K562 (cell line): ENCODE measurements at regions of chr5 and their contacts with region 1.

Region 1: GRCh38 chr5:135944967-135945560 is 9.7 kb downstream of the LECT2 start:
- DNase-seq: peak; percentile 15 to 71 (median 26)
- ATAC-seq: peak; percentile 67; the same call in 2 of the 3 replicates
- H3K4me3 ChIP-seq: no peak overlapping the region
- H3K27ac ChIP-seq: no peak overlapping the region
- H3K4me1 ChIP-seq: no peaks in the 10 kb centered on the region
- H3K27me3 ChIP-seq: 0 out of 5 replicates have a peak, but pooled peaks cover 0 to 3% of the 10 kb centered on the region in 2 experiments
- CTCF ChIP-seq: peak; percentile 61 to 83 (median 71); a peak in 5 of 6 replicates
- EP300 ChIP-seq: no peak
- POLR2A ChIP-seq: no peak
- RAD21 ChIP-seq: peak; percentile 61 to 88

Region 2: DNA sequence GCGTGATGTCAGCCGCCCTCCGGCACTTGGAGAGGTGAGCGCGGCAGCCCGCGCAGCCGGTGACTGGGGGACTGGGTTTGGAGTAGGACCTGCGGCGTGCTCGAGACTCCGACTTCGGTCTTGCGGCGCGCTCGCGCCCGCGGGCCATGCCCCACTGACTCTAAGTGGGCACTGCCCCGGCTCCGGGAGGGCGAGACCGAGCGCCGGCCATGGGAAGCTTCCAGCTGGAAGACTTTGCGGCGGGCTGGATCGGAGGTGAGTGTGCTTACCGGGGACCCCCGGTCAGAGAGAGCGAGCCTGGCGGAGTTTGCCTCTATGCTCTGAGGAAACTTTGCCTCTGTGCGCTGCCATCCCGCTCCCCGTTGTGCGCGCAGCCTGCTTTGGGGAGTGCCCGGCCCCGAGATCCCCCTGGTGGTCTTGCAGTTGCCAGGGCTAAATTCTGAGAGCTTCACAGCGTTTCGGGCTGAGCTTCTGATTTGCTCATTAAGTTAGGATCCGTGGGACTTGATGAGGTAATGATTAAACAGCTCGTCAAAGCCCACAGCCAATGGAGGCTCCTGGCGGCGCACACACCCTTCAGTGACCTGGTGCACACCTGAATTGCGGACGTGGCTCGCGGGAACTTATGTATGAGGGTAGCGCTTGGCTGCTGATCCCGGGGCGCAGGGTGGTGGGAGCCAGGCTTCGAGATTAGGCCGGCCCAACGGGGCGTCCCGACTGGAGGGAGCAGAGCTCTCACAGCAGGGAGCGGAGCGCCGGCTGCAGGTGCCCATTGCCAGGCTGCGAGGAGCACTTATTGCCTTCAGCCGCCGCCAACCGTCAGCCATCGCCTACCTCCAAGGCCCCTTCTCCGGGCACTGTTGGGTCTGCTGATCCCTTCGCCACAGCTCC is 110.2 kb before region 1 on chr5 and contains the start of gene SLC25A48:
- CTCF ChIA-PET with region 1: no interaction called
- POLR2A ChIA-PET with region 1: no interaction called
- in situ Hi-C with region 1: no loop called
- intact Hi-C with region 1: no loop called
- DNase-seq: peak in 2 of 4 experiments; percentile 72 to 78
- ATAC-seq: no peak
- H3K4me3 ChIP-seq: no peak within 1 kb of the TSS
- H3K27ac ChIP-seq: no peak within 1 kb of the TSS
- H3K4me1 ChIP-seq: peaks cover 0 to 9% of the 10 kb centered on the region in 2 experiments; a peak in 1 of 5 replicates
- H3K27me3 ChIP-seq: peaks cover 2 to 40% of the 10 kb centered on the region in 2 experiments; a peak in 3 of 5 replicates
- CTCF ChIP-seq: peak in 1 of 3 experiments; percentile 62; a peak in 1 of 6 replicates
- EP300 ChIP-seq: no peak
- POLR2A ChIP-seq: no peak
- RAD21 ChIP-seq: no peak
- polyA plus RNA-seq, gene SLC25A48: 0.08 to 0.22 TPM

Region 3: DNA sequence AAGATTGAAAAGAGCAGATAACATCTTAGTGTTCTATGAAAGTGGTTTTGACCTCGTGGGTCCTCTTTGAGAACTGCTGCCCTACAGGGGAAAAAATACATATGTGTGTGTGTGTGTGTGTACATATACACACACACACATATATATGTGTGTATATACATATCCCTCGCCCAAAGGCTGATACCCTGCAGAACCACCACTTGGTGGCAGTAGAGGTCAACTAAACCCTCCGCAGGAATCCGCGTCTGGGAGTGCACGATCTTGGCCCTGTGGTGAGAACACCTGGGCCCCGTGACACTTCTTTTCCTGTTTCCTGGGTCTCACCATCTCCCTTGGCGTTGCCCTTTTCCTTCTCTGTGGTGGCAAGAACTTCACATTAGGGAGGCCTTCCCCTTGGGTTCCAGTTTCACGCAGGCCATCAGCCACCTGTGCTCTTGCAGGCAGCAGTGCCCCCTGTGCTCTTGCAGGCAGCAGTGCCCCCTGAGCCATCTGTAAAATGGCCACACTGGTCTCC is 57.7 kb before region 1 on chr5:
- CTCF ChIA-PET with region 1: interaction called, 3 read pairs
- POLR2A ChIA-PET with region 1: no interaction called
- in situ Hi-C with region 1: no loop called
- intact Hi-C with region 1: loop called (anchors 5 kb)
- DNase-seq: peak; percentile 67 to 79 (median 70)
- ATAC-seq: peak; percentile 99
- H3K4me3 ChIP-seq: no peak overlapping the region
- H3K27ac ChIP-seq: no peak overlapping the region
- H3K4me1 ChIP-seq: no peaks in the 10 kb centered on the region
- H3K27me3 ChIP-seq: peaks cover 0 to 19% of the 10 kb centered on the region in 2 experiments; a peak in 4 of 5 replicates
- CTCF ChIP-seq: peak; percentile 84 to 92 (median 88)
- EP300 ChIP-seq: no peak
- POLR2A ChIP-seq: no peak
- RAD21 ChIP-seq: peak; percentile 84 to 92

Region 4: GRCh38 chr5:136062366-136063274 is 117.6 kb after region 1 on chr5:
- CTCF ChIA-PET with region 1: interaction called, 14 read pairs
- POLR2A ChIA-PET with region 1: no interaction called
- in situ Hi-C with region 1: no loop called
- intact Hi-C with region 1: loop called (anchors 1 kb)
- DNase-seq: peak; percentile 63 to 78 (median 72)
- ATAC-seq: peak; percentile 89
- H3K4me3 ChIP-seq: no peak overlapping the region
- H3K27ac ChIP-seq: no peak overlapping the region
- H3K4me1 ChIP-seq: no peaks in the 10 kb centered on the region; a peak in 1 of 5 replicates
- H3K27me3 ChIP-seq: peaks cover 8 to 33% of the 10 kb centered on the region in 2 experiments; a peak in 4 of 5 replicates
- CTCF ChIP-seq: peak; percentile 67 to 85 (median 78)
- EP300 ChIP-seq: no peak
- POLR2A ChIP-seq: no peak
- RAD21 ChIP-seq: peak; percentile 87 to 91

Region 5: DNA sequence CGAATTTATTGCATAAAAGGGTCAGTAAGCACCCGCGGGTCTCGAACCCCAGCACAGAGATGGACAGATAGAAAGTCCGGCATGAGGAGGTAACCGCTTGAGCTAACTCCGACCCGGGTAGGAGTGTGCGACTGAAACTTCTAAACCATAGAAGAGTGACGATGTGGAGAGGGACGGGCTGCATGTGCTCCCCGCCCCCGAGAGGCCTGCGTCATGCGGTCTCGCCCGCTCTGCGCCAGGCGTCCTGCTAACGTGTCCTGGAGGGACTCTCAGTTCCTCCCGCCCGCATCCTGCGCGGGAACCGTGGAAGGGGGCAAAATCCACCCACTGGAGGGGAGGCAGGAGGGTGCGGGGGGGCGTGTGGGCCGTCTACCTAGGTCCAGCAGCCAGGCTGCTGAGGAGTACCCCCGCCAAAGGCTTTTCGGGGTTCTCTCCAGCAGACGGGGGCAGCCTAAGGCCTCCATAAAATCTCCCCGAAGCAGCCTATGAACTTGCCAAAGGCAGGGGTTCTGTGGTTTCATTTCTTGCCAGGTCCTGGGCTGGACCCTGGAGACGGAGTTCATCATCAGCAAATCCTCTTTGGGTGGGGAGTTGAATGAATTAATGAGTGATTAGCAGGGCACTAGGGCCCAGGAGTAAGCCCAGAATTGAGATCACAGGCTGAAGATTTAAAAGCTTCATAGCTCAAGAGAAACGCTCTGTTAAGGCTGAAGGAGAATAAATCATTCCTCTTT is 135.6 kb after region 1 on chr5:
- CTCF ChIA-PET with region 1: no interaction called
- POLR2A ChIA-PET with region 1: no interaction called
- in situ Hi-C with region 1: no loop called
- intact Hi-C with region 1: loop called (anchors 1 kb)
- DNase-seq: peak; percentile 86 to 90 (median 88)
- ATAC-seq: peak; percentile 97
- H3K4me3 ChIP-seq: peak overlapping the region; percentile 43
- H3K27ac ChIP-seq: peak overlapping the region; percentile 64; the same call in 2 of the 3 replicates
- H3K4me1 ChIP-seq: peaks cover 9 to 12% of the 10 kb centered on the region in 2 experiments; a peak in 4 of 5 replicates
- H3K27me3 ChIP-seq: peaks cover 11 to 15% of the 10 kb centered on the region in 2 experiments
- CTCF ChIP-seq: no peak
- EP300 ChIP-seq: peak; percentile 71
- POLR2A ChIP-seq: peak; percentile 86
- RAD21 ChIP-seq: 0 out of 4 replicates have a peak, but pooled peaks of 1 of the 2 experiments have one; percentile 4

Region 6: GRCh38 chr5:136174021-136174659 is 229.1 kb after region 1 on chr5:
- CTCF ChIA-PET with region 1: no interaction called
- POLR2A ChIA-PET with region 1: no interaction called
- in situ Hi-C with region 1: no loop called
- intact Hi-C with region 1: loop called (anchors 2 kb)
- DNase-seq: peak; percentile 36 to 71 (median 52)
- ATAC-seq: peak; percentile 90
- H3K4me3 ChIP-seq: no peak overlapping the region
- H3K27ac ChIP-seq: no peak overlapping the region
- H3K4me1 ChIP-seq: 0 out of 5 replicates have a peak, but pooled peaks cover 0 to 2% of the 10 kb centered on the region in 2 experiments
- H3K27me3 ChIP-seq: no peaks in the 10 kb centered on the region
- CTCF ChIP-seq: peak; percentile 48 to 83 (median 62); a peak in 5 of 6 replicates
- EP300 ChIP-seq: no peak
- POLR2A ChIP-seq: no peak
- RAD21 ChIP-seq: peak; percentile 88 to 93

Region 7: DNA sequence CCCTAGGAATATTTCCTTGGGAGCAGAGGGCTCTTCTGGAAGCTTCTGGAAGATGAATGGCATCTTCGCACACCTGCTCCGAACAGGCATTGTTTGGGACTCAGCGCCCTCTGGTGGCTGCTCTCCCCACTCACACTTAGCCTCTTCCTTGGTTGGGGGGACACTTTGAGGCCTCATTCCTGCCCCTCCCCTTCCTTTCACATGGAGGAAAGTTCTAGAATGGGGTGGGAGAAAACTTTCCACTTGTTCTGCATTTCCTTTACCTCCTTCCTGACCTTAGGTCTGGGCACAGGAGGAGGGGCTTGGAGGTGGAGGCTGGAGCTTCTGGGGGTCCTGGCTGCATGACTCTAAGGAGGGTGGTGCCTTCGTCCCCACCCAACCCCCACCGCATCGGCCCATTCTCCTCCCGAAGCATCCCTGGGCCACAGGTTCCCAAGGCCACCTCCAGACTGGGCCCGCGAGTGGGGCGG is 267.2 kb after region 1 on chr5:
- CTCF ChIA-PET with region 1: interaction called, 4 read pairs
- POLR2A ChIA-PET with region 1: no interaction called
- in situ Hi-C with region 1: loop called (anchors 10 kb)
- intact Hi-C with region 1: loop called (anchors 5 kb)
- DNase-seq: peak; percentile 70 to 84 (median 80)
- ATAC-seq: peak; percentile 92
- H3K4me3 ChIP-seq: no peak overlapping the region
- H3K27ac ChIP-seq: no peak overlapping the region
- H3K4me1 ChIP-seq: peaks cover 0 to 2% of the 10 kb centered on the region in 2 experiments; a peak in 1 of 5 replicates
- H3K27me3 ChIP-seq: peaks cover 15 to 77% of the 10 kb centered on the region in 2 experiments; a peak in 4 of 5 replicates
- CTCF ChIP-seq: peak; percentile 80 to 91 (median 89)
- EP300 ChIP-seq: peak; percentile 19; the same call in 1 of the 2 replicates
- POLR2A ChIP-seq: no peak
- RAD21 ChIP-seq: peak; percentile 84 to 93